ENCODE measurements at regions of chr5 and their contacts with region 1.

Region 1: GRCh38 chr5:59360130-59360555 is 533.4 kb downstream of the PDE4D start:
- DNase-seq: no peak
- ATAC-seq: peak in 1 of 2 donors; percentile 38
- H3K4me3 ChIP-seq: peak overlapping the region; percentile 4
- H3K27ac ChIP-seq: peak overlapping the region; percentile 42
- H3K4me1 ChIP-seq: peaks cover 42% of the 10 kb centered on the region
- H3K27me3 ChIP-seq: no peaks in the 10 kb centered on the region
- CTCF ChIP-seq: no peak

Region 2: GRCh38 chr5:59204114-59204897 is 155.8 kb before region 1 on chr5:
- intact Hi-C with region 1: loop called (anchors 5 kb)
- DNase-seq: no peak
- ATAC-seq: no peak
- H3K4me3 ChIP-seq: no peak overlapping the region
- H3K27ac ChIP-seq: no peak overlapping the region
- H3K4me1 ChIP-seq: no peaks in the 10 kb centered on the region
- H3K27me3 ChIP-seq: no peaks in the 10 kb centered on the region
- CTCF ChIP-seq: no peak

Measured in lower lobe of right lung (tissue), 2 donors.